RWPE1 (cell line): ENCODE measurements at regions of chr4 and their contacts with region 1.

Region 1: GRCh38 chr4:2728876-2729875 is 27.0 kb downstream of the TNIP2 start:
- DNase-seq: no peak
- H3K27ac ChIP-seq: no peak overlapping the region
- CTCF ChIP-seq: no peak

Region 2: GRCh38 chr4:2686379-2687265 is 42.6 kb before region 1 on chr4:
- CTCF ChIA-PET with region 1: interaction called, 4 read pairs
- POLR2A ChIA-PET with region 1: interaction called, 10 read pairs
- DNase-seq: no peak
- H3K27ac ChIP-seq: no peak overlapping the region
- CTCF ChIP-seq: no peak

Region 3: GRCh38 chr4:2891294-2891693 is 162.1 kb after region 1 on chr4:
- CTCF ChIA-PET with region 1: interaction called, 11 read pairs
- POLR2A ChIA-PET with region 1: no interaction called
- DNase-seq: no peak
- H3K27ac ChIP-seq: no peak overlapping the region
- CTCF ChIP-seq: no peak